Head of caudate nucleus (tissue), 42 donors: ENCODE measurements at regions of chr1 and their contacts with region 1.

Region 1: DNA sequence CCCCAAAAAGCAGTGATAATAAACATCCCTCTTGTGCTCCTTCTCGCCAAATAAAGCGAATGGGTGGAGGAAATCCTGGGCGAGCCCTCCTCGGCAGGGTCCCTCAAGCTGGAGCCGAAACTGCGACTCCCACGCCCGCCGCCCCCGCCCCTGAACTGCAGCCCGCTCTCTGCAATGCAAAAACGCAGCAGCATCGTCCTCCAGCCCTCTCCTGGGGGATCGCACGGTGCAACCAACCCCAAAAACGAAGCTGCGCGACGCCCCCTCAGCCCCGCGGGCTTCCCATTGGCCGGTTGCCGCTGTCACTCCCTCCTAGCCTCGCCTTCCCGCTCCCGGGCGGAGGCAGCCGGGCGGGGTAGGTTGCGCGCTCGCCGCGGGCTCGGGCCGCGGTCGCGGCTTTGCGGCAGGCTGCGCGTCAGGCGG is at the start of gene TMCC2:
- DNase-seq: peak; percentile 92 to 99 (median 98)

Region 2: DNA sequence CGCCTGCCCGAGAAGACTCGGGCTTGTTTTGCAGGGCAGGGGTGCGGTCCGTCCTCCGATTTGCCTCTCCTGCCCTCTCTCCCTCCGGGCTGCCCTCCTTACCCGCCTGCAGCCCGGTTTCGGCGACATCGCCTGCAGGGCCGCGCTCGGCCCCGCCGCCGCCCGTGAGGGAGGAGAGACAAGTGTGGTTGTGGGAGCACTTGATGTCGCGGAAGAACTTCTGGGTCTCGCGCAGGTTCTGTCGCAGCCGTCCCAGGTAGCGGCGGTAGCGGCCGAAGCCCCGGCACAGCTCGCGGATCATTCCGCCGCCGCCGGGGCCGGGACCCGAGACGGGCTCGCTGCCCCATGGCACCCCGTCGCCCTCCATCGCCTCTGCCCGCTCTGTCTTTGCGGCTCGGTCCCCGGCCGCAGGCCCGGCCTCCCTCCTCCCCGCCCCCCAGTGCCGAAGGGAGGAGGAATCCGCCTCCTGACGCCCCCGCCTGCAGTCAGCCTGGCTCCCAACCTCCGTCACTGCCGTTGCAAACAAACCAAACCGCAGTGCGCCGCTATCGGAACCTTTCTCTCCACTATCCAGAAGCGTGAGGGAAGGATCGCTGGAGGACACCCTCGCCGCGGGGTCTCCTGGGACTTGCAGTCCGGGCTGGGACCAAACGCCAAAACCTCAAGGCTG is 16.3 kb before region 1 on chr1 and contains the start of gene DSTYK:
- intact Hi-C with region 1: loop called (anchors 1 kb)
- DNase-seq: peak; percentile 89 to 99 (median 96)

Region 3: DNA sequence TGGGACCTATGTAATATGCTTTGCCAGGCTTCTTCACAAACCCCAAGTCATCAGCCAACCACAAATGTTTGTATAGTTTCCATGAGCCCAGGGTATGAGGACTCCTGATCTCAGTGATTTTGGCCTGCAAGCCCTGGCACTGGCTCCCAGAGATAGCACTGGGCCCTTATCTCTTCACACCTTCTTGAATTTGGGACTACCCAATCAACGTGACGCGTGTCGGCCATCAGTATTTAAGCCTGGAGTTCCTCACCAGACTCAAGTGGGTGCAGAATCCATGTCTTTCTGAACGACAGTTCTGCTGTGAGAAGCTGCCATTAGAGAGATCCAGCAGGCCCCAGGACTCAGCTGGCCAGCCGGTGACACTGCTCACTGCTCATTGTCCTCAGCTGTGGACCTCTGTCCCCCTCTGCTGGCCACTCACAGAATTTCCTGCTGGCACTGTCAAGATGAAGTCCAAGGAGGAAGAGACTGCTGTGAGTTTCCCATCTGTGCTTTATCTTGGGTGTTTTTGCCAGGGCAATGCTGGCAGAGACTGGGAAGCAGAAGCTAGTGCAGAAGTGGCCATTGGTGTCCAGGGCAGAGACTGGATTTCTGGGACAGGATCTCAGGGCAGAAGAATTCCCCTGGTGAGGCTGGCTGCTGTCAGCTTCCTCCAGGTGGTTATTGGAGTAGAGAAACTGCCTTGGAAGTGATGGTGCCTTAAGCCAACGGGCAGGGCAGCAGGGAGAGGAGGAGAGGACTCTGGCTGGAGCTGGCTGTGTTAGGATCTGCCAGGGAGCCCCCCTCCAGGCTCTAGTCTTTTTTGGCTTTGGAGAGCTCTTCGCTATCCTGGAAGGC is 28.6 kb after region 1 on chr1:
- intact Hi-C with region 1: loop called (anchors 2 kb)
- DNase-seq: peak; percentile 80 to 98 (median 95)

Region 4: GRCh38 chr1:205335643-205336091 is 108.1 kb after region 1 on chr1:
- intact Hi-C with region 1: no loop called
- DNase-seq: peak; percentile 70 to 95 (median 88)